WTC11 (cell line): ENCODE measurements at regions of chr16 and their contacts with region 1.

Region 1: DNA sequence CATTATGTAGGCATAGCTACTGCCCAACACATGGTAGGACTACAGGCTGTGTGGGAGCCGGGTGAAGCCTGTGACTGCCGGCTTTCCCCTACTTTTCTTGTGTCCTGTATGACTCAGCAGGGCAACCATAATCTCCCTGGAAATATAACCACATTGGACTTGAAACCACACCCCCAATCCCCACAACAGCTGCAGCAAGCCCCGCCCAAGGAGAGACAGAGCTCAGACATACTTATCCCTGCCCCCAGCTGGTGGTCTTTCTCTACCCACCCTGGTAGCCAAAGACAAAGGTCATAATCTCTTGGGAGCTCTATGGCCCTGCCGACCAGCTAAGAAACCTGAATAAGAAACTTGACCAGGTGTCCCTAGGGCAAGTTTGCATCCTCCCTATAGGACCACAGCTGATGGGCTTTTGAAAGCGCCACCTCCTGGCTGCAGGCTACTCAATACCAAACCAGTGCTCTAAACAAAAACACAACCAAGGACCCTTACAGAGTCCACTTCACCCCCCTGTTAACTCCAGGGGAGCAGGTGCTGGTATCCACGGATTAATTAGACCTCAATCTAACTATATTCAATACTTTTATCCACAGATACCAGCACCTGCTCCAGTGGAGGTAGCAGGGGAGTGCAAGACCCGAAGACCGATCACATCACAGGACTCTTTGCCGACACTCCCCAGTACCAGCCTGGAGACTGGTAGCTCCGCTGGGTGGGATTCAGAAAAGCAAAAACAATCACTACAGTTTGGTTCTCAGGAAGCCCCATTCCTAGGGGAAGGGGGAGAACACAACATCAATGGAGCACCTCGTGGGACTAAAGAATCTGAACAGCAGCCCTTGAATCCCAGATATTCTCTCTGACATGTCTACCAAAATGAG is 91.2 kb downstream of the IRX5 start:
- DNase-seq: peak; percentile 52
- ATAC-seq: peak; percentile 94
- H3K4me3 Mint-ChIP-seq: peak overlapping the region; percentile 34; the same call in 1 of the 2 replicates
- H3K27ac Mint-ChIP-seq: no peak overlapping the region
- H3K4me1 Mint-ChIP-seq: peaks cover 5% of the 10 kb centered on the region; the same call in 1 of the 2 replicates
- H3K27me3 Mint-ChIP-seq: no peaks in the 10 kb centered on the region
- CTCF ChIP-seq: no peak

Region 2: GRCh38 chr16:54748611-54749190 is 273.1 kb before region 1 on chr16:
- CTCF ChIA-PET with region 1: no interaction called
- POLR2A ChIA-PET with region 1: no interaction called
- DNase-seq: no peak
- ATAC-seq: no peak
- H3K4me3 Mint-ChIP-seq: no peak overlapping the region
- H3K27ac Mint-ChIP-seq: no peak overlapping the region
- H3K4me1 Mint-ChIP-seq: peaks cover 18% of the 10 kb centered on the region
- H3K27me3 Mint-ChIP-seq: peaks cover 3% of the 10 kb centered on the region; the same call in 1 of the 2 replicates
- CTCF ChIP-seq: no peak

Region 3: GRCh38 chr16:54856871-54857270 is 165.0 kb before region 1 on chr16:
- CTCF ChIA-PET with region 1: no interaction called
- POLR2A ChIA-PET with region 1: no interaction called
- DNase-seq: no peak
- ATAC-seq: no peak
- H3K4me3 Mint-ChIP-seq: no peak overlapping the region
- H3K27ac Mint-ChIP-seq: no peak overlapping the region
- H3K4me1 Mint-ChIP-seq: no peaks in the 10 kb centered on the region; the same call in 1 of the 2 replicates
- H3K27me3 Mint-ChIP-seq: no peaks in the 10 kb centered on the region; the same call in 1 of the 2 replicates
- CTCF ChIP-seq: no peak

Region 4: GRCh38 chr16:54936979-54937670 is 84.7 kb before region 1 on chr16:
- CTCF ChIA-PET with region 1: interaction called, 12 read pairs
- POLR2A ChIA-PET with region 1: interaction called, 3 read pairs
- DNase-seq: peak; percentile 86
- ATAC-seq: peak; percentile 32
- H3K4me3 Mint-ChIP-seq: peak overlapping the region; percentile 74
- H3K27ac Mint-ChIP-seq: no peak overlapping the region
- H3K4me1 Mint-ChIP-seq: peaks cover 49% of the 10 kb centered on the region
- H3K27me3 Mint-ChIP-seq: peaks cover 98% of the 10 kb centered on the region
- CTCF ChIP-seq: peak; percentile 83

Region 5: GRCh38 chr16:54957403-54958171 is 64.2 kb before region 1 on chr16:
- CTCF ChIA-PET with region 1: interaction called, 22 read pairs
- POLR2A ChIA-PET with region 1: no interaction called
- DNase-seq: peak; percentile 61
- ATAC-seq: no peak
- H3K4me3 Mint-ChIP-seq: no peak overlapping the region
- H3K27ac Mint-ChIP-seq: no peak overlapping the region
- H3K4me1 Mint-ChIP-seq: peaks cover 2% of the 10 kb centered on the region
- H3K27me3 Mint-ChIP-seq: peaks cover 4% of the 10 kb centered on the region
- CTCF ChIP-seq: peak; percentile 61

Region 6: GRCh38 chr16:55001931-55002330 is 19.9 kb before region 1 on chr16:
- CTCF ChIA-PET with region 1: interaction called, 14 read pairs
- POLR2A ChIA-PET with region 1: no interaction called
- DNase-seq: no peak
- ATAC-seq: no peak
- H3K4me3 Mint-ChIP-seq: no peak overlapping the region
- H3K27ac Mint-ChIP-seq: no peak overlapping the region
- H3K4me1 Mint-ChIP-seq: no peaks in the 10 kb centered on the region
- H3K27me3 Mint-ChIP-seq: no peaks in the 10 kb centered on the region
- CTCF ChIP-seq: no peak

Region 7: GRCh38 chr16:55179852-55180585 is 158.2 kb after region 1 on chr16:
- CTCF ChIA-PET with region 1: no interaction called
- POLR2A ChIA-PET with region 1: no interaction called
- DNase-seq: no peak
- ATAC-seq: no peak
- H3K4me3 Mint-ChIP-seq: no peak overlapping the region
- H3K27ac Mint-ChIP-seq: no peak overlapping the region
- H3K4me1 Mint-ChIP-seq: peaks cover 20% of the 10 kb centered on the region
- H3K27me3 Mint-ChIP-seq: no peaks in the 10 kb centered on the region
- CTCF ChIP-seq: no peak